Adrenal gland (tissue), 19 donors: ENCODE measurements at regions of chr14 and their contacts with region 1.

Region 1: GRCh38 chr14:77469539-77469938 is 11.6 kb downstream of the AHSA1 start:
- DNase-seq: no peak
- H3K4me3 ChIP-seq: no peak overlapping the region
- H3K27ac ChIP-seq: no peak overlapping the region
- H3K4me1 ChIP-seq: no peaks in the 10 kb centered on the region
- H3K27me3 ChIP-seq: no peaks in the 10 kb centered on the region
- CTCF ChIP-seq: no peak
- POLR2A ChIP-seq: no peak

Region 2: DNA sequence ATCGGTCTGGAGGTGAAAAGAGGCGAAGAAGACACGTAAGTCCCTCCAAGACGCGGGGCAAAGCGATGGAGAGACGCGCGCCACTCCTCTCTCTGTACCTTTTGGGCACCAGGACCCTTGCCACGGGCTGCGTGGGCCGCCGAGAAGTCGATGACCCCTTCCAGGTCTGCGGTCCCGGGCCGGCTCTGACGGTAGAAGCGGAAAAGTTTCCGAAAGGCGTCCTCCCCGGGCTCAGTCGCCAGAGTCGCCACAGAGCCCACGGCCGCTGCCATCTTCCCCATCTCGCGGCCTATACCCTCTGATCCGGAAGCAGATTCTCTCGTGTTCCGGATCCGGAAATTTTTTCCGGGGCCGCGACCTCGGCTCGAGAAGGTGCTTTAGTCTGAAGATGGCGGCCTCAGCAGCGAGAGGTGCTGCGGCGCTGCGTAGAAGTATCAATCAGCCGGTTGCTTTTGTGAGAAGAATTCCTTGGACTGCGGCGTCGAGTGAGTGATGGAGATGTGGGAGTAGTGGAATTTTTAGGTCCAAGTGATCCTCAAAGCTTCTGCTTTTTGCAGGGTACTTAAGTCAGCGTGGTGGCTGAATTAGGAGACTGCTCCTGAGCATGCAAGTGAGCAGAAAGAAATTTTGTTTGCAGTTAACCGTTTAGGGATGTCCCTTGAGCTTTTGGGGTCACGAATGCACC is 238.3 kb after region 1 on chr14 and contains the starts of genes ALKBH1 and SLIRP:
- intact Hi-C with region 1: loop called in 1 of 2 experiments (anchors 10 kb)
- DNase-seq: peak; percentile 81 to 94 (median 89)
- H3K4me3 ChIP-seq: peak within 1 kb of the TSS; percentile 73 to 98 (median 89)
- H3K27ac ChIP-seq: peak within 1 kb of the TSS in 3 of 5 donors; percentile 41 to 64 (median 62)
- H3K4me1 ChIP-seq: peaks cover 9 to 31% of the 10 kb centered on the region in 2 donors
- H3K27me3 ChIP-seq: no peaks in the 10 kb centered on the region
- CTCF ChIP-seq: no peak
- POLR2A ChIP-seq: peak in 1 of 2 donors; percentile 60
- total RNA-seq, gene ALKBH1: 6.7 to 18.0 (median 12.1) TPM
- total RNA-seq, gene SLIRP: 70.6 to 744 (median 108) TPM